AG04450 (cell line): ENCODE measurements at regions of chrX and their contacts with region 1.

Region 1: DNA sequence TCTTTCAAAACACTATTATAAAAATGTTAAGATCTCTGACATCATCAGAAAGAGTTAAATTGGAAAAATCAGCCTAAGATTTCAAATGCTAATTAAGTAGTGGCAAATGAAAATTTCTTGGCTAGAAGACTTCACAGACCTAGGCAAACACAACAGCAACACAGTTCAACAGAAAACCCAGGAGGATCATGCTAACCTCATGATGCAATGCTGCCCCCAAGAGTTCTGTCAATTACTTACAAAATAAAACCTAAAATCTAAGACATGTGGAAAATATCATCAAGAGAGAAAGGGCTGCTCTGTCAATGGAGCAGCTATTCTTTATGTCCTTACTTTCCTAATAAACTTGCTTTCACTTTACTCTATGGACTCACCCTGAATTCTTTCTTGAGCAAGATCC is 21.0 kb downstream of the S100G start:
- DNase-seq: no peak
- H3K4me3 ChIP-seq: no peak overlapping the region
- H3K27ac ChIP-seq: no peak overlapping the region
- H3K27me3 ChIP-seq: no peaks in the 10 kb centered on the region
- CTCF ChIP-seq: peak; percentile 32

Region 2: GRCh38 chrX:15349046-15349445 is 1322.0 kb before region 1 on chrX:
- CTCF ChIA-PET with region 1: interaction called, 10 read pairs
- POLR2A ChIA-PET with region 1: no interaction called
- DNase-seq: peak; percentile 53
- H3K4me3 ChIP-seq: no peak overlapping the region
- H3K27ac ChIP-seq: no peak overlapping the region
- H3K27me3 ChIP-seq: no peaks in the 10 kb centered on the region
- CTCF ChIP-seq: peak; percentile 52

Region 3: DNA sequence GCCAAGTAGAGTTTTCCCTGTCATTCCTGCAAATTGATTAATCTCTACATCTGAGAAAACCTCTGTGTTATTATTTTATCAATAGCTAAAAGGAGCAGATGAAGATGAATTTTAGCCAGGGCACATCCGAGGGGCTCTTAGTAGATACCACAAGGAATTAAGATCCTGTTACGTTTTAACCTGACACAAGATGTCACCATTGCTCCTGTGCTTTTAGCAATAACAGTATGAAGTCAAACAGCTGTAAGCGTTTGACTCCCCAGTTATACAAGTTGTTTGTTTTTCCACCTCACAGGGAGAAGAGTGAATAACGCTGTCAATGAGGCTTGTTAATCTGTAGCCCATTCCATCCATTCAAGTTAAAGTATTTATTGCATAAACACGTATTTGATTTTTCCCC is 740.4 kb before region 1 on chrX:
- CTCF ChIA-PET with region 1: interaction called, 11 read pairs
- POLR2A ChIA-PET with region 1: no interaction called
- DNase-seq: peak; percentile 20
- H3K4me3 ChIP-seq: no peak overlapping the region
- H3K27ac ChIP-seq: no peak overlapping the region
- H3K27me3 ChIP-seq: no peaks in the 10 kb centered on the region
- CTCF ChIP-seq: peak; percentile 51

Region 4: DNA sequence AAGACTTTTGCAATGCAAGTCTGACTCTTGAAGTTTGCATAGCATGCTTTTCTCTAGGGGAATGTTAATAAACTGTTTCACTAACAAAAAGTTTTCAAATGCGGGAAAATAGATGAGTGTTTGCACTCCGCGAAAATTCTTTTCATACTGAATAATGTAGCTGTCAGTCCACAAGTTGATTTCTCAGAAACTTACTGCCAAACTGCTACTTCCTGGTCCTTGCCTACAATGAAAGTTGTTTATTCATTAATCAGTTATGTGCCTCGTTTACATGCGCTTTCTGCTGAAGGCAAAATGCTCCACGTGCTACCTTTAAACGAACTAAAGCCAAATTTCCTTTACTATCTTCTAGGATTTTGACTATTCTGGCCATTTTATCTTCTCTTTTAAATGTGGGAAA is 337.5 kb before region 1 on chrX:
- CTCF ChIA-PET with region 1: no interaction called
- POLR2A ChIA-PET with region 1: no interaction called
- DNase-seq: no peak
- H3K4me3 ChIP-seq: no peak overlapping the region
- H3K27ac ChIP-seq: no peak overlapping the region
- H3K27me3 ChIP-seq: no peaks in the 10 kb centered on the region
- CTCF ChIP-seq: no peak